ENCODE measurements at regions of chr12 and their contacts with region 1.

Region 1: GRCh38 chr12:46794593-46795190 is 31.1 kb downstream of the SLC38A4 start:
- DNase-seq: no peak
- ATAC-seq: no peak
- H3K4me3 ChIP-seq: no peak overlapping the region
- H3K27ac ChIP-seq: no peak overlapping the region
- H3K4me1 ChIP-seq: no peaks in the 10 kb centered on the region
- H3K27me3 ChIP-seq: no peaks in the 10 kb centered on the region
- CTCF ChIP-seq: no peak

Region 2: GRCh38 chr12:45532113-45532512 is 1262.6 kb before region 1 on chr12:
- intact Hi-C with region 1: loop called in 1 of 10 experiments (anchors 5 kb)
- DNase-seq: no peak
- ATAC-seq: no peak
- H3K4me3 ChIP-seq: no peak overlapping the region
- H3K27ac ChIP-seq: no peak overlapping the region
- H3K4me1 ChIP-seq: no peaks in the 10 kb centered on the region
- H3K27me3 ChIP-seq: no peaks in the 10 kb centered on the region
- CTCF ChIP-seq: no peak